ENCODE measurements at regions of chr6 and their contacts with region 1.

Region 1: GRCh38 chr6:31680840-31681671 is at the start of gene LY6G5C:
- DNase-seq: peak; percentile 81 to 93 (median 91)
- ATAC-seq: peak; percentile 82 to 86
- H3K4me3 ChIP-seq: peak within 1 kb of the TSS; percentile 70
- H3K27ac ChIP-seq: peak within 1 kb of the TSS; percentile 49
- H3K4me1 ChIP-seq: peaks cover 3% of the 10 kb centered on the region
- H3K27me3 ChIP-seq: no peaks in the 10 kb centered on the region
- total RNA-seq, gene LY6G5C: 2.1 to 3.8 (median 2.3) TPM

Region 2: GRCh38 chr6:31246050-31246521 is 435.0 kb before region 1 on chr6:
- intact Hi-C with region 1: no loop called
- DNase-seq: no peak
- ATAC-seq: no peak
- H3K4me3 ChIP-seq: no peak overlapping the region
- H3K27ac ChIP-seq: no peak overlapping the region
- H3K4me1 ChIP-seq: no peaks in the 10 kb centered on the region
- H3K27me3 ChIP-seq: no peaks in the 10 kb centered on the region

Region 3: GRCh38 chr6:31729515-31729978 is 48.5 kb after region 1 on chr6:
- intact Hi-C with region 1: loop called in 1 of 4 experiments (anchors 5 kb)
- DNase-seq: peak; percentile 93 to 97 (median 97)
- ATAC-seq: peak; percentile 88 to 91
- H3K4me3 ChIP-seq: peak overlapping the region; percentile 81
- H3K27ac ChIP-seq: peak overlapping the region; percentile 95
- H3K4me1 ChIP-seq: peaks cover 4% of the 10 kb centered on the region
- H3K27me3 ChIP-seq: no peaks in the 10 kb centered on the region

Region 4: DNA sequence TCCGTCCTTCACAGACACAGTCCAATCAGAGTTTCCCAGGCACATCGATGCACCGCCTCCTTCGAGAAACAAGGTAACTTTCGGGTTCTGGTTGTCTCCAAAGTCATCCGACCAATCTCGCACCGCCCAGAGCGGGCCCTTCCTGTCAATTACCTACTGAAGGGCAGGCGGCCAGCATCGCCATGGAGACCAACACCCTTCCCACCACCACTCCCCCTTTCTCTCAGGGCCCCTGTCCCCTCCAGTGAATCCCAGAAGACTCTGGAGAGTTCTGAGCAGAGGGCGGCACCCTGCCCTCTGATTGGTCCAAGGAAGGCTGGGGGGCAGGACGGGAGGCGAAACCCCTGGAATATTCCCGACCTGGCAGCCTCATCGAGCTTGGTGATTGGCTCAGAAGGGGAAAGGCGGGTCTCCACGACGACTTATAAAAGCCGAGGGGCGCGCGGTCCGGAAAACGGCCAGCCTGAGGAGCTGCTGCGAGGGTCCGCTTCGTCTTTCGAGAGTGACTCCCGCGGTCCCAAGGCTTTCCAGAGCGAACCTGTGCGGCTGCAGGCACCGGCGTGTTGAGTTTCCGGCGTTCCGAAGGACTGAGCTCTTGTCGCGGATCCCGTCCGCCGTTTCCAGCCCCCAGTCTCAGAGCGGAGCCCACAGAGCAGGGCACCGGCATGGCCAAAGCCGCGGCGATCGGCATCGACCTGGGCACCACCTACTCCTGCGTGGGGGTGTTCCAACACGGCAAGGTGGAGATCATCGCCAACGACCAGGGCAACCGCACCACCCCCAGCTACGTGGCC is 146.4 kb after region 1 on chr6 and contains the start of gene HSPA1B:
- intact Hi-C with region 1: loop called in 1 of 4 experiments (anchors 2 kb)
- DNase-seq: peak; percentile 99 to 100 (median 100)
- ATAC-seq: peak; percentile 97
- H3K4me3 ChIP-seq: peak within 1 kb of the TSS; percentile 77
- H3K27ac ChIP-seq: peak within 1 kb of the TSS; percentile 99
- H3K4me1 ChIP-seq: peaks cover 5% of the 10 kb centered on the region
- H3K27me3 ChIP-seq: no peaks in the 10 kb centered on the region
- total RNA-seq, gene HSPA1B: 110 to 299 (median 197) TPM

Region 5: GRCh38 chr6:31862344-31863227 is 181.5 kb after region 1 on chr6 and contains the start of gene NEU1:
- intact Hi-C with region 1: loop called in 1 of 4 experiments (anchors 10 kb)
- DNase-seq: peak; percentile 100
- ATAC-seq: peak; percentile 98
- H3K4me3 ChIP-seq: peak within 1 kb of the TSS; percentile 85
- H3K27ac ChIP-seq: peak within 1 kb of the TSS; percentile 86
- H3K4me1 ChIP-seq: peaks cover 2% of the 10 kb centered on the region
- H3K27me3 ChIP-seq: no peaks in the 10 kb centered on the region
- total RNA-seq, gene NEU1: 18.5 to 28.2 (median 22.7) TPM

Region 6: GRCh38 chr6:31952140-31952805 is 271.2 kb after region 1 on chr6:
- intact Hi-C with region 1: loop called in 3 of 4 experiments (anchors 5 to 10 kb)
- DNase-seq: peak; percentile 62 to 89 (median 85)
- ATAC-seq: peak; percentile 52 to 63
- H3K4me3 ChIP-seq: no peak overlapping the region
- H3K27ac ChIP-seq: no peak overlapping the region
- H3K4me1 ChIP-seq: no peaks in the 10 kb centered on the region
- H3K27me3 ChIP-seq: no peaks in the 10 kb centered on the region

Region 7: DNA sequence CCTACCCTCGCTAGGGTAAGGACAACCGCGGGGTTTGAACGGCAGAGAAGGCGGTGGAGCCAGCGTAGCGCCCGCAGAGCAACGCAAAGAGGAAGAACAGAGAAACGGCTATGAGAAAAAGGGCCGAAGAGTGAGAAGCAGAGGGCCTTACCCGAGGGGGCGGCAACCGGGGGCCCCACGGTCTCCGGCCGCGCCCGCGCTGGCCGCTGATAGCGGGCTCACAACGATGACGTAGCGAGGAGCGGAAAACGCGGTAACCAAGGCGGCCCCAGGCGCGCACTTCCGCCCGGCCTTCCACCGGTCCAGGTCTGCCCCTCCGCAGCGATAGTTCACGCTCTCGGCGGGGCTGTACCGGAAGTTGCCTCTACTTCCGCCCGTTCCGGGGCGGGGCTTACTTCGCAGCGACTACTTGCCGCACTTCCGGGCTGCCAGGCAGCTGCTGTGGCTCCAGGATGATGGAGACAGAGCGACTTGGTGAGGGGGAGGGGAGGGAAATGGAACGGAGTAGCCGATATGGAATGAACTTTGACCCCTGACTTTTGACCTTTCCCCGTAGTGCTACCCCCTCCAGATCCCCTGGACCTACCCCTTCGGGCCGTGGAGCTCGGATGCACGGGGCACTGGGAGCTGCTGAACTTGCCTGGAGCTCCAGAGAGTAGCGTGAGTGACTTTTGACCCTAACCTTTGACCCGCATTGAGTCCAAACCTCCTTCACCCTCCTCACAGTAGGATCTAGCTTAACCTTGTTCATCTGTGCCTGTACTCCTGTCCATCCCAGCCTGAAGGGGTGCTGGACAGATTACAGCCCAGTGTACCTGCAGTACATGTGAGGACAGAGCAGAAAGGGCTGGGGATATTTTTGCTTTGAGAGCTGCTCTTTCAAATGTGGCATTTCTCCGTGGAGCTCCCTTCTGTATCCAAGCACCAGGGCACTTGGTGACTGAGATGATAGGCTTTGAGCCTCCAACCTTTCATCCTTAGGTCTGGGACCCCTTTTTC is 278.0 kb after region 1 on chr6 and contains the starts of genes NELFE and SKIC2:
- intact Hi-C with region 1: loop called in 3 of 4 experiments (anchors 5 to 10 kb)
- DNase-seq: peak; percentile 99
- ATAC-seq: peak; percentile 98 to 99
- H3K4me3 ChIP-seq: peak within 1 kb of the TSS; percentile 73
- H3K27ac ChIP-seq: peak within 1 kb of the TSS; percentile 67
- H3K4me1 ChIP-seq: no peaks in the 10 kb centered on the region
- H3K27me3 ChIP-seq: no peaks in the 10 kb centered on the region
- total RNA-seq, gene NELFE: 49.2 to 53.1 (median 50.9) TPM
- total RNA-seq, gene SKIC2: 36.5 to 43.1 (median 37.0) TPM